Activated B cell treated with CpG ODN at 0.5 μM for 24 hours (primary cell): ENCODE measurements at regions of chr10 and their contacts with region 1.

Region 1: DNA sequence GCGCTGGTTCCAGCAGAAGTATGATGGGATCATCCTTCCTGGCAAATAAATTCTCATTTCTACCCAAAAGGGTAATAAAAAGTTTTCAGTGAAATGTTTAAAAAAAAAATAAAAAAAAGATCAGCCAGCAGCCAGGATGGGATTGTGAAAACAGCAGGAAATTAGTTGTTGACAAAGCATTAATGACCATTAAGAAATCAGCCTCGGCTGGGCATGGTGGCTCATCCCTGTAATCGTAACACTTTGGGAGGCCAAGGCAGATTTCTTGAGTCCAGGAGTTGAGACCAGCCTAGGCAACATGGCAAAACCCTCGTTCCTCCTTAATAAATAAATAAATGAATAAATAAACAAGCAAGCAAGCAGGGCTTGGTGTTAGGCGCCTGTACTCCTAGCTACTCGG is 82.6 kb downstream of the PTEN start:
- DNase-seq: no peak
- ATAC-seq: no peak
- H3K4me3 Mint-ChIP-seq: no peak overlapping the region
- H3K27ac Mint-ChIP-seq: no peak overlapping the region
- H3K4me1 Mint-ChIP-seq: peaks cover 13% of the 10 kb centered on the region
- H3K27me3 Mint-ChIP-seq: no peaks in the 10 kb centered on the region
- CTCF ChIP-seq: no peak

Region 2: DNA sequence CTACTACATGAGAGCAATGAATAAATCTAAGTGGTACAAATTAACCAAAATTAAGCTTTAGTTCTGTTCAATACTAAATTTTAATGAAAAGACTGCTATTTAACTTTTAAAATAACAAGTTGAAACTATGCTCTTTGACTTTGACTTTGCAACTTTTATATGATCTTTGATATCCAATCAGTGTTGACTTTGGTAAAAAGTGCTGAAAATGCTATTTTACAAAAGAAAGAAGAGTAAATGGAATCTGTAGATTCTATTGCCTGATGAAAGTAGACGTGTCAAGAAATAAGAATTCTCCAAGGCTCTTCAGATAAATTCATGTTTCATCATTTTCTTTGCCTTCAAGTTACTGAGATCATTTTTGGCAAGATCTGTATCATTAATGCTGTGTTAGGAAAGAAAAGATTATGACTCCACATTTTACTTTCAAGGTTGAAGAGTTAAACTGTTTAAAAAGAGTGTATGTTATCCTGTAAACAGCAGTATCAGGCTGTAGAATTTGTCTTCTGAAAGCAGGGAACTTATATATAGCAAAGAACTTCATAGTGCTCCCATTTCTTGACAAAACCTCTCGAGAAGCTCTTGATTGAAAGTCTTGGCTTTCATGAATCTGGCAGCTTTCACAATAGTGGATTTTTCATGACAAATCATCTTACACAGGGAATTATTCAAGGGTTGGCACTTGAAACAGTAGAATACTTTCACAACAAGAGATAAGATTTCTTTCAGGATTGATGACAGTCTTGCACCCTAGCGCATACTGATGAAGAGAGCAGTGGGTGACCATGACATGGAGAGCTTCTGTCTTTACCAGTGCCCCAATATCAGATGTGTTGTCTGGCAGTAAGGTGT is 10.5 kb before region 1 on chr10:
- CTCF ChIA-PET with region 1: no interaction called
- POLR2A ChIA-PET with region 1: no interaction called
- intact Hi-C with region 1: loop called (anchors 1 kb)
- DNase-seq: no peak
- ATAC-seq: no peak
- H3K4me3 Mint-ChIP-seq: no peak overlapping the region
- H3K27ac Mint-ChIP-seq: no peak overlapping the region
- H3K4me1 Mint-ChIP-seq: peaks cover 37% of the 10 kb centered on the region
- H3K27me3 Mint-ChIP-seq: no peaks in the 10 kb centered on the region
- CTCF ChIP-seq: no peak